GM13977 (cell line): ENCODE measurements at regions of chr17 and their contacts with region 1.

Region 1: DNA sequence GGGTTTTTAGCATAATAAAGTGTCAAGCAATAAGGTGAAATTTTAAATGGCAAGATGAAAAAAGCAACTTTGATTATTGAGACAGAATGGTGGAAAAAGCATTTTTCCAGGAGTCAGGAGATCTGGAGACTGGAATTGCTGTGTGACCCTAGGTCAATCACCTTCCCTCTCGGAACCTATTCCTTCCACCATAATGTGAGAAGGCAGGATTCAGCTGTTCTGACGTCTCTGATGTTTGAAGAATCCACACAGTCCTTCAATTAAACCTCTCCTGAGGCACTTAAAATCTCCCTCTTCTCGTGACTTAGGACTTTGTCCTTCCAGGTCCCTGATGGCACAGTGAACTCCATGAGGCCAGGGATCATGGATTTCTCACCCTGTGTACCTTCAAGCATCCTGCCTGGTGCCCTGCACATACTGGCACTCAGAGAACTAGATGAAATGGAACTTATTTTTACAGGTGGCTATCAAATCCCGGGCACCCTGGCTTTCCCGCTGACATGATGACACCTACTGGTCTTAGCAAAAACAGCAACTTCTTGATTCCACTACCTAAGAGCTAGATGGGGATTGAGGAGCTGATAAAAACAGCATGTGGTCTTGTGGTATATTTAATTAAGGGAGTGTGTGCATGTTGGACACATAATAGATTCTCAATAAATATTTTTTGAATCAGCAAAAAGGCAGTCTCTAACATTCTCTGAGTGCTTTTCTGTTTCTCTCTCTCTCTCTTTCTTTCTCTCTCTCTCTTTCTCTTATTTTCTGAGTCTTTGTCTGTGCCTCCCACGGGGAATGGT is 2.3 kb upstream of the CCDC182 start:
- DNase-seq: peak; percentile 77
- CTCF ChIP-seq: peak; percentile 82

Region 2: GRCh38 chr17:57130761-57131461 is 616.5 kb before region 1 on chr17:
- in situ Hi-C with region 1: loop called (anchors 25 kb)
- DNase-seq: peak; percentile 94
- CTCF ChIP-seq: peak; percentile 85

Region 3: GRCh38 chr17:57243171-57243948 is 504.1 kb before region 1 on chr17:
- in situ Hi-C with region 1: loop called (anchors 25 kb)
- DNase-seq: peak; percentile 81
- CTCF ChIP-seq: peak; percentile 100